AG04450 (cell line): ENCODE measurements at regions of chr10 and their contacts with region 1.

Region 1: GRCh38 chr10:124632064-124632531 is 112.1 kb downstream of the FAM53B start:
- DNase-seq: no peak
- H3K4me3 ChIP-seq: no peak overlapping the region
- H3K27ac ChIP-seq: no peak overlapping the region
- H3K27me3 ChIP-seq: no peaks in the 10 kb centered on the region
- CTCF ChIP-seq: peak; percentile 29; the same call in 1 of the 2 replicates

Region 2: DNA sequence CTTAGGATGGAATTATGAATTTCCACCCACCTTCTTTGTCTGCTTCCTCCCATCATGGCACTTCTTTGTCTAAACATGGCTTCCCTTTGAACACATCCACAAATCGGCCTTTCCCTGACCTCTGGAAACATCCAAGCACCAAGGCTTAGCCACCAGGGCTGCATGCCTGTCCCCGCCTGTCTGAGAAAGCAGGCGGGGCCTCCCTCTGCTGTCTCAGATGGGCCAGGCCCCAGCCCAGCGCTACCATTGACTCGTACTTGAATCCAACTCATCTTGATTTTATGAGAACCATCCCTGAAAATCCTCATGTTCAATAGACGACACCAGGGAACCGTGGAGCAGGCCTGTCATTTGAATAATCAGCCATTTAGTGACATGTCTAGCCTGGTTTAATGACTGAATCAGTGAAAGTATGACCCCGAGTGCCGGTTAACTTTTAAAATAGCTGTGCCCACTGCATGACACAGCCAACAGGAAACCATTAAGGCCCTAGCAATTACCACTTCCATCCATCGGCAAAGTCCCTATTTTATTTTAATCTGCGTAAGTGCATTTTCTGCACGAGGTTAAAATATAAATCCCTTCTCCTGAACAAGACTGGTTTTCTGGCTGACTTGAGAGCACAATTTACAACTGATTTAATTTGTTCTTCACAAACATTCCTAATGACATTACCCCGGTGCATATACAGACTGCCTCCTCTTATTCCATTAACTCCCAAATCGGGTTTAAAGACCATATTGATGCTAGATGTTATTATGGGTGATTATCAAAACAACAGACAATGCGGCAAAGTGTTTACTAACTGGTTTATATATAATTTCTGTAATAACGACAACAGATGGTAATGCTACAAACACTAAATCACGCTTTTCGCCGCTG is 1283.2 kb before region 1 on chr10:
- CTCF ChIA-PET with region 1: interaction called, 10 read pairs
- POLR2A ChIA-PET with region 1: no interaction called
- DNase-seq: no peak
- H3K4me3 ChIP-seq: no peak overlapping the region
- H3K27ac ChIP-seq: no peak overlapping the region
- H3K27me3 ChIP-seq: no peaks in the 10 kb centered on the region
- CTCF ChIP-seq: no peak